ENCODE measurements at regions of chr17 and their contacts with region 1.

Region 1: GRCh38 chr17:47840740-47841603 is at the start of gene SCRN2:
- DNase-seq: peak; percentile 67
- H3K4me3 ChIP-seq: peak within 1 kb of the TSS; percentile 62
- H3K27ac ChIP-seq: peak within 1 kb of the TSS; percentile 61
- H3K4me1 ChIP-seq: no peaks in the 10 kb centered on the region
- H3K27me3 ChIP-seq: peaks cover 4% of the 10 kb centered on the region
- CTCF ChIP-seq: peak; percentile 84
- total RNA-seq, gene SCRN2: 6.2 and 11.2 TPM in 2 replicates

Region 2: GRCh38 chr17:47889734-47890529 is 49.0 kb after region 1 on chr17:
- CTCF ChIA-PET with region 1: interaction called, 19 read pairs
- POLR2A ChIA-PET with region 1: no interaction called
- intact Hi-C with region 1: loop called (anchors 2 kb)
- DNase-seq: peak; percentile 77
- H3K4me3 ChIP-seq: no peak overlapping the region
- H3K27ac ChIP-seq: no peak overlapping the region
- H3K4me1 ChIP-seq: no peaks in the 10 kb centered on the region
- H3K27me3 ChIP-seq: no peaks in the 10 kb centered on the region
- CTCF ChIP-seq: peak; percentile 78

Region 3: GRCh38 chr17:47941236-47941994 is 100.4 kb after region 1 on chr17 and contains the start of gene PNPO:
- CTCF ChIA-PET with region 1: interaction called, 5 read pairs
- POLR2A ChIA-PET with region 1: no interaction called
- intact Hi-C with region 1: loop called (anchors 10 kb)
- DNase-seq: peak; percentile 99
- H3K4me3 ChIP-seq: peak within 1 kb of the TSS; percentile 63
- H3K27ac ChIP-seq: peak within 1 kb of the TSS; percentile 66
- H3K4me1 ChIP-seq: peaks cover 5% of the 10 kb centered on the region
- H3K27me3 ChIP-seq: no peaks in the 10 kb centered on the region
- CTCF ChIP-seq: no peak
- total RNA-seq, gene PNPO: 12.3 and 14.6 TPM in 2 replicates

Region 4: DNA sequence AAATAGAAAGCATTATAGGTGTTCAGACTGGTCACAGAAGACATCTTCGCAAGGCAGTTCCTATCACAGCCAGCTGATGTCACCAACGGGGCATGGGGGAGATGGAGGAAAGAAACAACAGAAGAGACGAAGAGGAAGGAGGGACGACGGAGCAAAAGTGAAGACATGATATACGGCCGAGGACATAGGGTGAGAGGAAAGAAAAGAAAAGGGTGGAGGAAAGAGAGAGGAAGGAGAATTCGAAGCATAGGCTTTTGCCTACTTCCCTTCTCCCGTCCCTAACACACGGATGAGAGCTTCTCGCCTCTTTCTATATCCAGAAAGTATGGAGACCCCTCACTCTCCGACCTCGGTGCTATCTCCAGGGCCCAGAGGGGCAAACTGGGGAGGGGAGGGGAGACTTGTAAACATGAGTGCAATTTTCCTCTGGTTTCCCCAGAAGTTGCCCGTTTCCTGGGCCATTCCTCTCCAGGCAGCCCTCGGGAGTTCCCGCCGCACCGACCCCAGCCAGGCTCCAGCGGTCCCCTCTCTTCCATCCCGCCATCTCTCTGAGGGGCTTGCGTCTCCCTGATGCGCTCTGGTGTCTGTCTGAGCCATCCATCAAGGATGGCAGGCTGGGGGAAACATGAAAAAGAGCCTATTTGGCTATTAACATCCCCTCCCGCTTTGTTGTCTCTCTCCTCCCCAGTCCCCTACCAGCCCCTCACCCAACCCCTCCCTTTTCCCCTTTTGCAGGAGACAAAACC is 170.6 kb after region 1 on chr17:
- CTCF ChIA-PET with region 1: no interaction called
- POLR2A ChIA-PET with region 1: no interaction called
- intact Hi-C with region 1: loop called (anchors 5 kb)
- DNase-seq: peak; percentile 88
- H3K4me3 ChIP-seq: peak overlapping the region; percentile 42
- H3K27ac ChIP-seq: peak overlapping the region; percentile 71
- H3K4me1 ChIP-seq: peaks cover 54% of the 10 kb centered on the region
- H3K27me3 ChIP-seq: no peaks in the 10 kb centered on the region
- CTCF ChIP-seq: peak; percentile 81

Measured in A673 (cell line).